Caco-2 (cell line): ENCODE measurements at regions of chr11 and their contacts with region 1.

Region 1: GRCh38 chr11:100855466-100856067 is 168.5 kb downstream of the ARHGAP42 start:
- DNase-seq: peak in 1 of 2 experiments; percentile 65
- H3K4me3 ChIP-seq: no peak overlapping the region
- H3K4me3 Mint-ChIP-seq: no peak overlapping the region
- H3K27ac Mint-ChIP-seq: no peak overlapping the region
- H3K4me1 ChIP-seq: peaks cover 32% of the 10 kb centered on the region
- H3K4me1 Mint-ChIP-seq: peaks cover 27% of the 10 kb centered on the region
- H3K27me3 ChIP-seq: no peaks in the 10 kb centered on the region
- H3K27me3 Mint-ChIP-seq: no peaks in the 10 kb centered on the region
- CTCF ChIP-seq: peak; percentile 64 to 81

Region 2: GRCh38 chr11:100629671-100630070 is 225.9 kb before region 1 on chr11:
- CTCF ChIA-PET with region 1: no interaction called
- POLR2A ChIA-PET with region 1: no interaction called
- intact Hi-C with region 1: loop called (anchors 1 kb)
- DNase-seq: peak in 1 of 2 experiments; percentile 22
- H3K4me3 ChIP-seq: no peak overlapping the region
- H3K4me3 Mint-ChIP-seq: no peak overlapping the region
- H3K27ac Mint-ChIP-seq: no peak overlapping the region
- H3K4me1 ChIP-seq: no peaks in the 10 kb centered on the region
- H3K4me1 Mint-ChIP-seq: no peaks in the 10 kb centered on the region
- H3K27me3 ChIP-seq: no peaks in the 10 kb centered on the region
- H3K27me3 Mint-ChIP-seq: peaks cover 2% of the 10 kb centered on the region
- CTCF ChIP-seq: peak in 1 of 2 experiments; percentile 25

Region 3: GRCh38 chr11:100681064-100681502 is 174.5 kb before region 1 on chr11:
- CTCF ChIA-PET with region 1: interaction called, 4 read pairs
- POLR2A ChIA-PET with region 1: no interaction called
- intact Hi-C with region 1: loop called (anchors 1 kb)
- DNase-seq: peak; percentile 81 to 86
- H3K4me3 ChIP-seq: no peak overlapping the region
- H3K4me3 Mint-ChIP-seq: peak overlapping the region; percentile 34
- H3K27ac Mint-ChIP-seq: peak overlapping the region; percentile 71
- H3K4me1 ChIP-seq: no peaks in the 10 kb centered on the region; the same call in 1 of the 2 replicates
- H3K4me1 Mint-ChIP-seq: peaks cover 13% of the 10 kb centered on the region
- H3K27me3 ChIP-seq: no peaks in the 10 kb centered on the region
- H3K27me3 Mint-ChIP-seq: no peaks in the 10 kb centered on the region
- CTCF ChIP-seq: no peak

Region 4: DNA sequence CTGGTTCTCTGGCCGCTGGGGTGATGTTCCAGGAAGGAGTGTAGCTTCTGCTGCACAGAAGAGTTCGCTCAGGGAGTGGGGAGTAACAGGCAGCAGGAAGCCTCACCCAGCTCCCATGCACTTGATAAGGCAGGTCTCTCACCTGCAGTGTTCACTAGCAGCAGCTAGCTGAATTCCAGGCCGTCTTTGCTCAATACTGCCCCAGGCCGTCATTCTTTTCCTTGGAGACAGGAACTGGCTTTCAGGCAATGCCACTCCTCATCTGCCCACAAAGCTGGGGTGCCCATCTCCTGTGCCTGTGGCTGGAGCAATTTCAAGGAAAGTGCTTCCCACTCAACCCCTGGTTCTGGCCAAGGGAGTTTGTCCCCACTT is 102.4 kb before region 1 on chr11:
- CTCF ChIA-PET with region 1: no interaction called
- POLR2A ChIA-PET with region 1: no interaction called
- intact Hi-C with region 1: loop called (anchors 2 kb)
- DNase-seq: peak; percentile 85 to 89
- H3K4me3 ChIP-seq: no peak overlapping the region
- H3K4me3 Mint-ChIP-seq: no peak overlapping the region
- H3K27ac Mint-ChIP-seq: peak overlapping the region; percentile 81
- H3K4me1 ChIP-seq: peaks cover 33% of the 10 kb centered on the region
- H3K4me1 Mint-ChIP-seq: peaks cover 16% of the 10 kb centered on the region
- H3K27me3 ChIP-seq: no peaks in the 10 kb centered on the region
- H3K27me3 Mint-ChIP-seq: no peaks in the 10 kb centered on the region
- CTCF ChIP-seq: peak in 1 of 2 experiments; percentile 35

Region 5: GRCh38 chr11:100876815-100877520 is 21.4 kb after region 1 on chr11:
- CTCF ChIA-PET with region 1: no interaction called
- POLR2A ChIA-PET with region 1: no interaction called
- intact Hi-C with region 1: no loop called
- DNase-seq: no peak
- H3K4me3 ChIP-seq: no peak overlapping the region
- H3K4me3 Mint-ChIP-seq: no peak overlapping the region
- H3K27ac Mint-ChIP-seq: no peak overlapping the region
- H3K4me1 ChIP-seq: peaks cover 5% of the 10 kb centered on the region; the same call in 1 of the 2 replicates
- H3K4me1 Mint-ChIP-seq: no peaks in the 10 kb centered on the region
- H3K27me3 ChIP-seq: no peaks in the 10 kb centered on the region
- H3K27me3 Mint-ChIP-seq: no peaks in the 10 kb centered on the region
- CTCF ChIP-seq: no peak